HepG2 (cell line): ENCODE measurements at regions of chr17 and their contacts with region 1.

Region 1: DNA sequence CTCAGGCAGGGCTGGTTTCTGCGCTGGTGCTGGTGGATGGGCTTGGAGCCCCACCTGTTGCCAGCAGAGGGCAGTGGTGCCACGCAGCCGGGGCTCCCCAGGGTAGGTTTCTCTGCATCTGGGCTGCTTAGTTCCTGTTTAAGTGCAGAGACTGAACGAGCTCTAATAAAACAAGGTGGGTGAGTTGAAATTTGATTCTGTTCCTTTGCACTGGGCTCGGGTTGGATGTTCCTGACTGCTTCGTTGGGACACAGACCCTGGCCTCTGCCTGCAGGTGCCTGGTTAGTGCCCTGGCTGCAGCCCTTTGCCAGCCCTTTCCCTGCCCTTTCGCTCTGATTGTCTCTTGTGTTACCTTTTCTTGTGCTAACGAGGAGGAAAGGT is 30.0 kb downstream of the TBCD start:
- DNase-seq: peak; percentile 50
- ATAC-seq: peak; percentile 97
- H3K4me3 ChIP-seq: no peak overlapping the region
- H3K27ac ChIP-seq: no peak overlapping the region
- H3K4me1 ChIP-seq: no peaks in the 10 kb centered on the region
- H3K27me3 ChIP-seq: no peaks in the 10 kb centered on the region
- CTCF ChIP-seq: peak; percentile 98
- EP300 ChIP-seq: no peak
- POLR2A ChIP-seq: no peak
- RAD21 ChIP-seq: peak; percentile 98

Region 2: DNA sequence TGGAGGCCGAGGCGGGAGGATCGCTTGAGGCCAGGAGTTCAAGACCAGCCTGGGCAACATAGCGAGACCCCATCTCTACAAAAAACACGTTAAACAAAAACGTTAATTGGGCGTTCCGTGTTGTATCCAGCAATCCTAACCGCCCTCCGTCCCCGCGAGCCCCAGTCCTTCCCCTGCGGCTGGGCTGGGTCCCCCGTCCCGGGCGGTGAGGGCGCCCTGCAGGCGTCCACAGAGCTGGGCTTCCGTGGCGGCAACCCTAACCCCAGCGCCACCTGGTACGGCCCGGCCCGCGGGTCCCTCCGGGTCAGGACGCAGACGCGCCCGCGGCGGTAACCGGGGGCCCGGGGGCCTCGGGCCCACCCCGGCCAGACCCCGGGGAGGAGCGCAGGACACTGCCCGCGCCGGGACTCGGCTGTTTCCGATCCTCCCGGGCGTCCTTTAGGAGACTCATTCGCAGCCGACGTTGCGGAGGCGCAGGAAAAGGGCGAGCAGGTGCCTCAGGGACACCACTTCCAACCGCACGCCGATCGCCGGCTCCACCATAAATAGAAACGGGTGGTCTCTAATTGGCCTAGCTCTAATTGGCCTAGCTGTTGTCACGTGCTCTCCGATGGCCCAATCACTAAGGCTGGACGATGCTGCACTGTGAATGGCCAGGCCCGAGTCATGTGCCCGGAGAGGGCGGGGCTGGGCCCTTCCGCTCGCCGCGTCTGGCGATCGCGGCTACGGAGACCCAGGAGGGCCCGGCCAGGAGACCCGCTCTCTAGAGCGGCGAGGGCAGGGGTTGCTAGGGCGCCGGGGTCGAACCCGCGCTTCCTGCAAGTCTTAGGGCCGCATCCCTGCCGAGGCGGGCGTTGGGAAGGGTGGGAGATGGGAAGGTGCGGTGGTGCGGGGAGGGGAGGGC is 489.4 kb before region 1 on chr17:
- CTCF ChIA-PET with region 1: no interaction called
- POLR2A ChIA-PET with region 1: no interaction called
- in situ Hi-C with region 1: no loop called
- intact Hi-C with region 1: no loop called
- DNase-seq: peak; percentile 99
- ATAC-seq: peak; percentile 89
- H3K4me3 ChIP-seq: peak overlapping the region; percentile 80 to 87 (median 81)
- H3K27ac ChIP-seq: peak overlapping the region; percentile 93
- H3K4me1 ChIP-seq: peaks cover 88% of the 10 kb centered on the region
- H3K27me3 ChIP-seq: no peaks in the 10 kb centered on the region
- CTCF ChIP-seq: no peak
- EP300 ChIP-seq: peak; percentile 51 to 70
- POLR2A ChIP-seq: peak; percentile 99 to 100
- RAD21 ChIP-seq: peak; percentile 43

Region 3: DNA sequence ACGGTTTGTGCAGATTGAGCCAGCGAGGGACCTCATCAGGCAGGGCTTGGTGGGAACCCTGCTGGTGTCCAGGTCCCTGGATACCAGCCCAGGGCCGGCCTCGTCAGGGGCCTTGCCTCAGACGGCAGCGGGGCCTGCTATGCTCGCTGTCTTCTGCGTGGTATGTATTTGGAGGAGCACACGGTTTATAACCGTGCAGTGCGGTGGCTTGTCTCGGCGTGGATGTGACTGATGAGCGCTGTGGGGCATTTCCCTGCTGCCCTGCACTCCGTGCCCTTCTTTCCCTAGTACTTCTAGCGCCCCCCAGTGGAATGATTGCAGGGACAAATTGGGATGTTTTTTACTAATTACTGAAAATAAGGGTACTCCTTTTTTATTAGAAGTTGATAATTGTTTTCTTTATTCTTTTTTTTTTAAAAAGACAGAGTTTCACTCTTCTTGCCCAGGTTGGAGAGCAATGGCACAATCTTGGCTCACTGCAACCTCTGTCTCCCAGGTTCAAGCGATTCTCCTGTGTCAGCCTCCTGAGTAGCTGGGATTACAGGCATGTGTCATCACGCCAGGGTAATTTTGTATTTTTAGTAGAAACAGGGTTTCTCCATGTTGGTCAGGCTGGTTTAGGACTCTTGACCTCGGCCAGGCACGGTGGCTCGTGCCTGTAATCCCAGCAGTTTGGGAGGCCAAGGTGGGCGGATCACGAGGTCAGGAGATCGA is 14.7 kb before region 1 on chr17:
- CTCF ChIA-PET with region 1: no interaction called
- POLR2A ChIA-PET with region 1: no interaction called
- in situ Hi-C with region 1: no loop called
- intact Hi-C with region 1: no loop called
- DNase-seq: peak; percentile 49
- ATAC-seq: peak; percentile 81
- H3K4me3 ChIP-seq: no peak overlapping the region
- H3K27ac ChIP-seq: no peak overlapping the region
- H3K4me1 ChIP-seq: no peaks in the 10 kb centered on the region
- H3K27me3 ChIP-seq: no peaks in the 10 kb centered on the region
- CTCF ChIP-seq: peak; percentile 85
- EP300 ChIP-seq: no peak
- POLR2A ChIP-seq: no peak
- RAD21 ChIP-seq: peak; percentile 90

Region 4: GRCh38 chr17:82917691-82918345 is 135.9 kb after region 1 on chr17:
- CTCF ChIA-PET with region 1: interaction called, 21 read pairs
- POLR2A ChIA-PET with region 1: no interaction called
- in situ Hi-C with region 1: no loop called
- intact Hi-C with region 1: no loop called
- DNase-seq: peak; percentile 23
- ATAC-seq: peak; percentile 61
- H3K4me3 ChIP-seq: no peak overlapping the region
- H3K27ac ChIP-seq: no peak overlapping the region
- H3K4me1 ChIP-seq: peaks cover 11% of the 10 kb centered on the region
- H3K27me3 ChIP-seq: no peaks in the 10 kb centered on the region
- CTCF ChIP-seq: peak; percentile 73
- EP300 ChIP-seq: no peak
- POLR2A ChIP-seq: no peak
- RAD21 ChIP-seq: peak; percentile 72

Region 5: GRCh38 chr17:82924798-82925197 is 142.9 kb after region 1 on chr17:
- CTCF ChIA-PET with region 1: interaction called, 4 read pairs
- POLR2A ChIA-PET with region 1: no interaction called
- in situ Hi-C with region 1: loop called (anchors 5 kb)
- intact Hi-C with region 1: no loop called
- DNase-seq: peak; percentile 27
- ATAC-seq: peak; percentile 12; the same call in 1 of the 3 replicates
- H3K4me3 ChIP-seq: no peak overlapping the region
- H3K27ac ChIP-seq: no peak overlapping the region
- H3K4me1 ChIP-seq: peaks cover 12% of the 10 kb centered on the region
- H3K27me3 ChIP-seq: no peaks in the 10 kb centered on the region
- CTCF ChIP-seq: peak; percentile 39
- EP300 ChIP-seq: no peak
- POLR2A ChIP-seq: no peak
- RAD21 ChIP-seq: no peak

Region 6: GRCh38 chr17:83200202-83200699 is 418.4 kb after region 1 on chr17:
- CTCF ChIA-PET with region 1: interaction called, 16 read pairs
- POLR2A ChIA-PET with region 1: no interaction called
- in situ Hi-C with region 1: no loop called
- intact Hi-C with region 1: no loop called
- DNase-seq: no peak
- ATAC-seq: no peak
- H3K4me3 ChIP-seq: no peak overlapping the region
- H3K27ac ChIP-seq: no peak overlapping the region
- H3K4me1 ChIP-seq: peaks cover 15% of the 10 kb centered on the region
- H3K27me3 ChIP-seq: peaks cover 11 to 62% of the 10 kb centered on the region in 2 experiments
- CTCF ChIP-seq: no peak
- EP300 ChIP-seq: no peak
- POLR2A ChIP-seq: no peak
- RAD21 ChIP-seq: no peak